HCT116 (cell line): ENCODE measurements at regions of chr14 and their contacts with region 1.

Region 1: DNA sequence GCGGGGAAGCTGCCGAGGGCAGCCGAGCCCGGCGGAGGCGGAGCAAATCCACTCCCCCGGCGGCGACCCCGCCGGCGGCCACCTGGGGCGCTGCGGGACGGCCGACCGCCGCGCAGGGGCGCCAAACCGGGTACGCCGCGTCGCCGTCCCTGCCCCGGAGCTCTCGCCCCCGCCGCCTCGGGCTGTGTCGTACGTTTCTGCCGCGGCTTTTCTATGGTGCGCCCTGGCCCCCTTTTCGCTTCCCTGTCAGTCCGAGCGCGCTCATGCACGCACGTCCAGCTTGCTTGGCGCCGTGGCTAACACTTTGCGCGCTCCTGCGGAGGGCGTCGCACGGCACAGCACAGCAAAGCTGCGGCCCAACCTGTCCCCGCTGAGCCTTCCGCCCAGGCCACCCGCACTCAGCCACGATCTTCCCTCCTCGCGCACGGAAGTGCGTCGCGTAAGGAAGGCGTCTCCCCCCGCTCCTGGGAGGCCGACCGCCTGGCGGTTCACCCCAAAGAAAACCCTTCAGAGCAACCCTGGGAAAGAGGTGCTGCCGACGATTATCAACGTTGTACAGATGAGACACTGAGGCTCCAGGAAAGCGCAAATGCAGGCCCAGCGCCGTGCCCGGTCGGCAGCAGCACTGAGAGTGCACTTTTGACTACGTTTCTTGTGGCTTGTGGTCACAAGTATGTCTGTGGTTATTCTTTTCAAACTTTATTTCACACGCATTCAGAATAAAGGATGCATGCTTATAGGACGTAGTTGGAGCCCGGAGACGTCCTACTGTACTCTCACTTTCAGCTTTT is at the start of gene HECTD1:
- DNase-seq: peak; percentile 67
- ATAC-seq: peak; percentile 87
- H3K4me3 ChIP-seq: peak within 1 kb of the TSS; percentile 83 to 84
- H3K27ac ChIP-seq: peak within 1 kb of the TSS; percentile 99
- H3K4me1 ChIP-seq: peaks cover 18 to 31% of the 10 kb centered on the region in 2 experiments
- H3K27me3 ChIP-seq: no peaks in the 10 kb centered on the region
- CTCF ChIP-seq: peak in 2 of 3 experiments; percentile 55 to 60; a peak in 4 of 6 replicates
- POLR2A ChIP-seq: peak; percentile 81
- RAD21 ChIP-seq: no peak; the same call in none of the 2 replicates
- total RNA-seq, gene HECTD1: 160 TPM

Region 2: GRCh38 chr14:31219169-31219568 is 11.2 kb after region 1 on chr14:
- CTCF ChIA-PET with region 1: interaction called, 13 read pairs
- POLR2A ChIA-PET with region 1: no interaction called
- RAD21 ChIA-PET with region 1: no interaction called
- intact Hi-C with region 1: no loop called
- DNase-seq: no peak
- ATAC-seq: no peak
- H3K4me3 ChIP-seq: no peak overlapping the region
- H3K27ac ChIP-seq: no peak overlapping the region
- H3K4me1 ChIP-seq: no peaks in the 10 kb centered on the region
- H3K27me3 ChIP-seq: no peaks in the 10 kb centered on the region
- CTCF ChIP-seq: no peak
- POLR2A ChIP-seq: no peak
- RAD21 ChIP-seq: no peak

Region 3: GRCh38 chr14:31229638-31230229 is 21.8 kb after region 1 on chr14:
- CTCF ChIA-PET with region 1: interaction called, 10 read pairs
- POLR2A ChIA-PET with region 1: interaction called, 29 read pairs
- RAD21 ChIA-PET with region 1: no interaction called
- intact Hi-C with region 1: no loop called
- DNase-seq: peak; percentile 92
- ATAC-seq: peak; percentile 95
- H3K4me3 ChIP-seq: peak overlapping the region; percentile 20 to 52
- H3K27ac ChIP-seq: no peak overlapping the region
- H3K4me1 ChIP-seq: peaks cover 11 to 21% of the 10 kb centered on the region in 2 experiments; a peak in 3 of 4 replicates
- H3K27me3 ChIP-seq: no peaks in the 10 kb centered on the region
- CTCF ChIP-seq: no peak
- POLR2A ChIP-seq: no peak
- RAD21 ChIP-seq: no peak; the same call in 1 of the 2 replicates

Region 4: DNA sequence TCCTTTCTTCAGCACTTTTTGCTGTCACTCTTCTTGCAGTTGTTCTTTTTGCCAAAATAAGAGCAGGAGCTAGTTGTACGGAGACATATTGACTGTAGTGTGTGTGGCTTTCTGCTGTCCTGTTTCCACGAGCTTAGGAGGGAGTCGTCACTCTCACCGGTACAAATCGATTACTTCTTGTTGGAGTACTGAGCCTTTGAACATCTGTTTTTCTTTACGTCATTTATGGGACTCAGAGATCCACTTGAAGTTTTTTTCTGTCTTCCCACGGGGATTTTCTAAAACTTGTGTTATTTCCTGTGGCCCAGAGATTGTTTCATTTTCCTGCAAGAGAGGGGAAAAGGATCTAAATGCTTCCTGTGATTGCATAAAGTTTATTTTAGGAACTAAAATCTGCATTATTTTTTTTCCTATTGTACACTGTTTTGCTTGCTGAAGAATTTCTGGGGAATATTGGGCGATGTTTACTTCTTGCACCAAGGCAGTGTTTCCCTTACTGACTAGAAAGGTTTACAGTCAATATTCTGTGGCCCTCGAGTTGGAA is 669.4 kb after region 1 on chr14:
- CTCF ChIA-PET with region 1: no interaction called
- POLR2A ChIA-PET with region 1: no interaction called
- RAD21 ChIA-PET with region 1: no interaction called
- intact Hi-C with region 1: no loop called
- DNase-seq: no peak
- ATAC-seq: no peak
- H3K4me3 ChIP-seq: no peak overlapping the region
- H3K27ac ChIP-seq: no peak overlapping the region
- H3K4me1 ChIP-seq: peaks cover 0 to 13% of the 10 kb centered on the region in 2 experiments; a peak in 2 of 4 replicates
- H3K27me3 ChIP-seq: no peaks in the 10 kb centered on the region
- CTCF ChIP-seq: no peak
- POLR2A ChIP-seq: no peak
- RAD21 ChIP-seq: no peak